Activated naive CD4-positive, alpha-beta T cell treated with anti-CD3 and anti-CD28 coated beads, Interleukin-2, amount 10 ng/mL, durations not matched to agents 7 days and 5 days (primary cell): ENCODE measurements at regions of chr1 and their contacts with region 1.

Region 1: GRCh38 chr1:64136752-64137411 is 66.5 kb upstream of the UBE2U start:
- DNase-seq: peak; percentile 82
- H3K4me3 Mint-ChIP-seq: no peak overlapping the region
- H3K27ac Mint-ChIP-seq: no peak overlapping the region
- H3K4me1 Mint-ChIP-seq: no peaks in the 10 kb centered on the region
- H3K27me3 Mint-ChIP-seq: no peaks in the 10 kb centered on the region

Region 2: GRCh38 chr1:63615768-63616420 is 521.0 kb before region 1 on chr1:
- CTCF ChIA-PET with region 1: interaction called, 22 read pairs
- DNase-seq: peak; percentile 61
- H3K4me3 Mint-ChIP-seq: no peak overlapping the region
- H3K27ac Mint-ChIP-seq: no peak overlapping the region
- H3K4me1 Mint-ChIP-seq: no peaks in the 10 kb centered on the region
- H3K27me3 Mint-ChIP-seq: no peaks in the 10 kb centered on the region

Region 3: GRCh38 chr1:63691701-63692425 is 445.0 kb before region 1 on chr1:
- CTCF ChIA-PET with region 1: interaction called, 45 read pairs
- DNase-seq: peak; percentile 52
- H3K4me3 Mint-ChIP-seq: no peak overlapping the region
- H3K27ac Mint-ChIP-seq: no peak overlapping the region
- H3K4me1 Mint-ChIP-seq: no peaks in the 10 kb centered on the region
- H3K27me3 Mint-ChIP-seq: no peaks in the 10 kb centered on the region

Region 4: GRCh38 chr1:64051796-64052195 is 85.1 kb before region 1 on chr1:
- CTCF ChIA-PET with region 1: no interaction called
- DNase-seq: no peak
- H3K4me3 Mint-ChIP-seq: no peak overlapping the region
- H3K27ac Mint-ChIP-seq: no peak overlapping the region
- H3K4me1 Mint-ChIP-seq: no peaks in the 10 kb centered on the region
- H3K27me3 Mint-ChIP-seq: peaks cover 8% of the 10 kb centered on the region